Cardiac septum (tissue), 1 donor: ENCODE measurements at regions of chr2 and their contacts with region 1.

Region 1: DNA sequence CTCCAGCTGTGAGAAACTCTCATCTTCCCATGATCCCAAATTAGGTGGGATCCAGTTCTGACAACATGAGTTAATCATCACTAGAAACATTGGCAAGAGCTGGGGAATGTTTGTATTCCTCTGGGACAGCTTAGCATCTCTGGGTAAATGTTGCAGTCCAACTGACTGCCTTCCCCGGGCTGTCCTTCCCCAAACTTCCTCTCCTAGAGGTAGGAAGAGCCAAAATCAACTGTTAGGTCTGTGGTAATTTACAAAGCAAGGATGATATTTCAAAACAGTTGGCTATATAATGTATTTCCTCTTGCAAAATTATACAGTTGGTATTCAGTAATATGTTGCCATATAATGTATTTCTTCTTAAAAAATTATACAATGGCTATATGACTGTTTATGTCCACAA is 148.5 kb downstream of the MGAT5 start:
- DNase-seq: no peak

Region 2: GRCh38 chr2:133986081-133986837 is 416.2 kb before region 1 on chr2:
- intact Hi-C with region 1: loop called (anchors 10 kb)
- DNase-seq: no peak

Region 3: DNA sequence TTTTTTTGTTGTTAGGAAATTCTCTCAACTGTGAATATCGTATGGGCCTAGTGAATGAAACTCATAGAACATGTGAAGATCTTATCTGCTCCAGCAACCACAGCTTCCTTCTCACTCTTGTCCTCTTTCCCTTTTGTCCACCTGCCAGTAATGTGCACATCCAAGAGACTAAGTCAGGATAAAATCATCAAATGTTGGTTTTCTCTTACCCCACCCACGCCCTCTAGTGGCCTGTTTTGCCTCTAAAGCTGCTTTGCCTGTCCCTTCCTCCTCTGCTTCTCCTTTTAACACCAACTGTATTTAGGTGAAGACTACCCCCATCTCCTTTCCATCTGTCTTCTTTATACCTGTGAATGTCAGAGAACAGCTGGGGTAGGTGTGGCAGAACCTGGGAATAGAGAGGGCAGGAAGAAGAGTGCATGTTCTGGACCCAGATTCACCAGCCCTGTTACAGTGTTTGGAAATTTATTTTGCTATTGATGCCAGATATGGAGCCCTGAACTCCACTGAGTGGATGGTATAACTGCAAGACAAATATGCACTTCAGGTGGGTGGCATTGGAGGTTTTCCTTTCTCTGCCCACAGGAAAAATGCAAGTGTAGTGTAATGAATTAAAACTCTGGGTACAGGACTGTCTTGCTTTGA is 156.9 kb before region 1 on chr2:
- intact Hi-C with region 1: loop called (anchors 5 kb)
- DNase-seq: peak; percentile 85

Region 4: DNA sequence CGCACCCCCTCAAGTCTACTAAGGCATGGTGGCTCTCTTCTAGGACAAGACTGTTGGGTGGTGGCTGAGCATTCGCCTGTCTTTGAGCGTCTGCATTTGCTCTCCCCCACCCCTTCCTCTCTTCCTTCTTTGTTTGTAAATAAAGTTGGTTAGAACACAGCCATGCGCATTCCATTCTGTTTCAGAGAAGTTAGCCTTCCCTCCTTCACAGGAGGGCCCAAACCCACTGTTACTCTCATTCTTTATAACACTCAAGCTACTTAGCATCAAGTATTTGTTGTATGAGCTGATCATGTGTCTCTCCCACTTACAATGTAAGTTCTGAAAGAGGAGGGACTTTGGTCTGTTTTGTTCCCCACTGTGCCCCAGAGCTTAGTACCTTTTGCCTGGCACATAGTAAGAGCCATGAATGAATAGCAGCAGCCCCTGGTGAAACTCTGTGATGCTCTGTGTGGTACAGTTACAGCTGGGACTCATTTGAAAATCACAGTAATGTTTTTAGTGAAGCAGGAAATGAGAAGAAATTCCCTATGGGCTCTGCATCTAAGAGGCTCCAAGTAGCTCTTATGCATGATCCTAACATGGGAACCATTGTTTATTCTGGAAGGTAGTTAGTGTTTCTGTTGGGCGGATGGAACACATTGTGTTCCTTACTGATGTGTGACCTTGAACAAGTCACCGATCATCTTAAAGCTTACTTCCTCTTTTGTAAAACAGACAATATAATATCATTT is 140.8 kb before region 1 on chr2:
- intact Hi-C with region 1: loop called (anchors 2 kb)
- DNase-seq: no peak

Region 5: GRCh38 chr2:134314681-134315368 is 87.6 kb before region 1 on chr2:
- intact Hi-C with region 1: loop called (anchors 5 kb)
- DNase-seq: no peak

Region 6: DNA sequence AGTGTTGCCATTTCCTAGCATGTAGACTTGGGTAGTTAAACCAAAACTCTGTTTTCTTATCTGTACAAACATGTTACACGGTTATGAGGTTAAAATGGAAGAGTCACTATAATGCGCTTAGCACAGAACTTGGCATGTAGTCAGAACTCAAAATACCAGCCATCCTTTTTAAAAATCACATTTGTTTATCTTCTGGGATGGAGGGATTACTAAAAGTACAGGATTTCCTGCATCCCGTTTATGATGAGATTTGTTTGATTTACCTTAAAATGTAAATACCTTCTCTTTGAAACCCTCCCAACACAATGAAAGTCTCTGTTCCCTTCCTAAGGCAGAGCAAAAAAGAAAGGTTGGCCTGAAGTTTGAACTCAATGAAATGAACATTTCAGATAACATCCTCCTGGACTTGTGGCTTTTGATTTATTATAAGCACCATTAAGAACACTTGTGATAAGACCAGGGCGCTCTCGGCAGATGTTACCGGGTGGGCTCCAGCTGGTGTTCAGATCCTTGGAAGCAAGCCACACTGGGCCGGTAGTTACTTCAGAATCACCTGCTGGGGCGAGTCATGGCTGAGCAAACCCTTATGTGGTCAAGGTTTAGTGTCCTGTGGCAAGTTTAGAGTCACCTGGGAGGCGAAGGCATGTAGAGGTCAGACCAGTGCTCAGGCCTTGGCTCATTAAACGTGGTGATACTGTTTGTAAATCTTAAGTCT is 42.9 kb before region 1 on chr2:
- intact Hi-C with region 1: loop called (anchors 5 kb)
- DNase-seq: no peak

Region 7: GRCh38 chr2:134375935-134376334 is 26.5 kb before region 1 on chr2:
- intact Hi-C with region 1: loop called (anchors 2 kb)
- DNase-seq: no peak